ENCODE measurements at regions of chr14 and their contacts with region 1.

Region 1: GRCh38 chr14:105480952-105481801 is 5.5 kb upstream of the CRIP1 start:
- DNase-seq: peak; percentile 60
- H3K4me3 ChIP-seq: peak overlapping the region; percentile 55
- H3K27ac ChIP-seq: peak overlapping the region; percentile 85
- H3K27me3 ChIP-seq: peaks cover 10% of the 10 kb centered on the region
- CTCF ChIP-seq: peak; percentile 97

Region 2: GRCh38 chr14:105369653-105370040 is 111.5 kb before region 1 on chr14:
- CTCF ChIA-PET with region 1: interaction called, 10 read pairs
- POLR2A ChIA-PET with region 1: no interaction called
- DNase-seq: no peak
- H3K4me3 ChIP-seq: no peak overlapping the region
- H3K27ac ChIP-seq: no peak overlapping the region
- H3K27me3 ChIP-seq: no peaks in the 10 kb centered on the region
- CTCF ChIP-seq: no peak

Region 3: DNA sequence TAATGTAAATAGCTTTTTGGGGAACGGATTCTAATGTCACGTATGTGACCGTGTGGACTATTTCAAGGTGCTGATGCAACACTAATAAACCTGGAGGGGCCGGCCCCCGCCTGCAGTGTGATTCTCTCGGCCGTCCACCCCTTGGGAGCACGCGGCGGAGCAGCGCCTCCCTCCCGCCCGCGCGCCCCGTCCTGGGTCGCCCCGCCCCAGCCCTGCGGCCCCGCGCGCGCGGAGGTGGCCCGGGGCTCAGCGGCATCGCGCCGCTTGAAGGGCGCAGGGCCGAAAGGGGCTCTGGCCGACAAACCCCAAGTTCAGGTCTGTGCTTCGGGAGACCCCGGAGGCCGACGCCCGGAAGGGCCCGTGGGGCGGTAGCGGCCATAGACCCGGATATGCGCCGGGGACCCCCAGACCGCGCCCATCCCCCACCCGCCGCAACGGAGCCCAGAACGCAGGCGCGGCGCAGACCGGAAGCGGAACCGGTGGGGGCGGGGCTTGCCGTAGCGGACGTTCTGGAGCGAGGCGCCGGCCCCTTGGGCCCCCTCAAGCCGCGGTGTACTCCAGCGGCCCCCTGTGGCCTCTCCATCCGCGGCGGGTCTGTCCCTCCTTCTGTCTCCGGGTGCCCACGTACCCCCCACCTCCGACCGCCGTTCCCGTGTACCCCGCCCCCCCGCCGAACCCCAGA is 83.0 kb before region 1 on chr14 and contains the start of gene TEX22:
- CTCF ChIA-PET with region 1: interaction called, 10 read pairs
- POLR2A ChIA-PET with region 1: no interaction called
- DNase-seq: peak; percentile 36
- H3K4me3 ChIP-seq: peak within 1 kb of the TSS; percentile 82
- H3K27ac ChIP-seq: peak within 1 kb of the TSS; percentile 21
- H3K27me3 ChIP-seq: no peaks in the 10 kb centered on the region
- CTCF ChIP-seq: peak; percentile 10; the same call in 1 of the 2 replicates
- polyA plus RNA-seq, gene TEX22: 0.05 and 0.14 TPM in 2 replicates

Region 4: DNA sequence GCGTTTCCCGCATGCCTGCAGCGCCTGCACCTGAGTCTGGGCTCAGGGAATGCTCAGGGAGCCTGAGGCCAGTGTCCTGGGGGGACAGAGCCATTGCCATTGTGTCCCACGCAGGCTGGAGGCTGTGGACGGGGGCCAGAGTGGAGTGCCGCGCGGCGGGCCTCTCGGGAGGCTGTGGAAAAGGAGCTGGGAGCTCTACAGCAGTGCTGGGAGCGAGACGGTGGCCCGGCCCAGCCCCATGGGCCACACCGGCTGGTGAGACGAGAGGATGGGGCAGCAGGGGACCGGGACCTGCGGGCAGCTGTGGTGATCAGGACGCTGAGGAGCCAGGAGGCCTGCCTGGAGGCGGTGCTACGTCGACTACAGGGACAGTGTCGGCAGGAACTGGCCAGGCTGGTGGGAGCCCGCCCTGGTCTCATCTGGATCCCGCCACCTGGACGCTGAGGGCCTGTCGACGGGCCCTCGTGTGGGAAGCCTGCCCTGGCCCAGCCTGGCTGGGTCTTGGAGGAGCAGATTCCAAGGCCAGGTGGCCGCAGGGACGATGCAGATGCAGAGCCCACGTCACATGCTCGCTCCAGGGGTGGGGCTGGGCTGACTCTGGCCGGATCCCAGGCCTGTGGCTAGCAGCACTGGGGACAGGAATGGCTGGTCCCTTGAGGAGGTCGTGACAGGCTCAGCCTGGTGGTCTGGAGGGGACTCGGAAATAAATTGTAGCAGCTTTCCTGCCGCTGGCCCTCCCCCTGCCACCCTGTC is 17.5 kb after region 1 on chr14:
- CTCF ChIA-PET with region 1: no interaction called
- POLR2A ChIA-PET with region 1: no interaction called
- DNase-seq: no peak
- H3K4me3 ChIP-seq: no peak overlapping the region
- H3K27ac ChIP-seq: no peak overlapping the region
- H3K27me3 ChIP-seq: no peaks in the 10 kb centered on the region
- CTCF ChIP-seq: no peak

Region 5: GRCh38 chr14:105527661-105528581 is 46.7 kb after region 1 on chr14:
- CTCF ChIA-PET with region 1: interaction called, 13 read pairs
- POLR2A ChIA-PET with region 1: interaction called, 4 read pairs
- DNase-seq: peak; percentile 8
- H3K4me3 ChIP-seq: peak overlapping the region; percentile 59
- H3K27ac ChIP-seq: no peak overlapping the region
- H3K27me3 ChIP-seq: peaks cover 3% of the 10 kb centered on the region
- CTCF ChIP-seq: peak; percentile 70

Measured in AG04450 (cell line).